PC-3 (cell line): ENCODE measurements at regions of chr12 and their contacts with region 1.

Region 1: GRCh38 chr12:30985814-30986452 is 59.4 kb downstream of the TSPAN11 start:
- DNase-seq: peak; percentile 69
- ATAC-seq: peak; percentile 62
- H3K4me3 ChIP-seq: no peak overlapping the region
- H3K27ac ChIP-seq: no peak overlapping the region
- H3K4me1 ChIP-seq: peaks cover 18% of the 10 kb centered on the region
- H3K27me3 ChIP-seq: no peaks in the 10 kb centered on the region
- CTCF ChIP-seq: peak; percentile 77

Region 2: DNA sequence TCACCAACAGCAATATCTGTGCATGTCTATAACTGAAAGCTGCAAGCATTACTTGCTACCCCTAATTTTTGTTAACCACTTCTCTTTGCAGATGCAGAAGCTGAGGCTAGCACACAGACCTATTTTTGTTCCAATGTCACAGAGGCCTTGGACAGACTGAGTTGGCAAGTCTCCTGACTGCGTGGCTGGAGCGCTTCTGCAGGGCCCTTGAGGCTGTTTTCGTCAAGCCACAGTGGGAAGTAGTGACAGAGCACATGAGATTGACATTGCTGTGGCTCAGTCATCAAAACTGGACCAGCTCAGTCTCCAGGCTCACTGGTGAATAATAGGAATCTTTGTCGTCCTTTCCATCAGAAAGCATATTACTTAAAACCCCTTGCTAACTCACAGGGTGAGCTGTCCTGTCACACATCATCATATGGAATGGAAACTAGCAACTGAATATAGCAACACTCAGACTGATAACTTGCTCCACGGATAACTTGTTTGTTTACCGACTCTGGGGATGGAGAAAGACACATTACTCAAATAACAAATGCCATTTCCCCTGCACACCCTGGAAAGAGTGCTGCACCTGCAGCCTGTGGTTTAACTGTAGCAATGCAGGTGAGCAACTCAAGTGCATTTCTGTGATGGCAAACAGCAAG is 44.1 kb after region 1 on chr12:
- CTCF ChIA-PET with region 1: no interaction called
- POLR2A ChIA-PET with region 1: no interaction called
- intact Hi-C with region 1: loop called (anchors 10 kb)
- DNase-seq: peak; percentile 25
- ATAC-seq: peak; percentile 55
- H3K4me3 ChIP-seq: no peak overlapping the region
- H3K27ac ChIP-seq: no peak overlapping the region
- H3K4me1 ChIP-seq: peaks cover 28% of the 10 kb centered on the region
- H3K27me3 ChIP-seq: no peaks in the 10 kb centered on the region
- CTCF ChIP-seq: no peak

Region 3: DNA sequence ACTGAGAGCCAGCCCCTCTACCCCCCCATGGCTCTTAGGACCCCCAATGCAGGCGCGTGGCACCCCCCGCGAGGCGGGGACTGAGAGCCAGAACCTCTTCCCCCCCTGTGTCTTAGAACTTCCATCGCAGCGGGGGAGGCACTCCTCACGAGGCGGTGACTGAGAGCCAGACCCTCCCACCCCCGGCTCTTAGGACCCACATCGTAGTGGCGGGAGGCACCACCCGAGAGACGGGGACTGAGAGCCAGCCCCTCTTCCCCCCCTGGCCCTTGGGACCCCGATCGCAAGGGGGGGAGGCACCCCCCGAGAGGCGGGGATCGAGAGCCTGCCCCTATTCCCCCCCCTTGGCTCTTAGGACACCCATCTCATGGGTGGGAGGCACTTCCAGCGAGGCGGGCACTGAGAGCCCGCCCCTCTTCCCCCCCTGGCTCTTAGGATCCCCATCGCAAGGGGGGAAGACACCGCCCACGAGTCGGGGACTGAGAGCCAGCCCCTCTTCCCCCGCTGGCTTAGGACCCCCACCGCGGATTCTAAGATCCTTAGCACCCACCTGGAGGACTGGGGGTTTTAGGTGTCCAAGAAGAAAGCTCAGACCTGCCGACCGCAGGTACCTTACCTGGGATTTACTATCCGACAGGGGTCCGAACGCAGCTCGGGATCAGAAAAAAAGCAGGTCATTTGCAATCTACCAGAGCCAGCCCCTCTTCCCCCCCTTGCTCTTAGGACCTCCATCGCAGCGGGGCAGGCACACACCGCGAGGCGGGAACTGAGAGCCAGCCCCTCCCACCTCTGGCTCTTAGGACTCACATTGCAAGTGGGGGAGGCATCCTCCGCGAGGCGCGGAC is 132.6 kb after region 1 on chr12:
- CTCF ChIA-PET with region 1: no interaction called
- POLR2A ChIA-PET with region 1: no interaction called
- intact Hi-C with region 1: no loop called
- DNase-seq: no peak
- ATAC-seq: no peak
- H3K4me3 ChIP-seq: 0 out of 2 replicates have a peak overlapping the region, but pooled peaks have one; percentile 15
- H3K27ac ChIP-seq: no peak overlapping the region
- H3K4me1 ChIP-seq: peaks cover 8% of the 10 kb centered on the region; the same call in 1 of the 2 replicates
- H3K27me3 ChIP-seq: peaks cover 7% of the 10 kb centered on the region
- CTCF ChIP-seq: no peak